ENCODE measurements at regions of chr14 and their contacts with region 1.

Region 1: DNA sequence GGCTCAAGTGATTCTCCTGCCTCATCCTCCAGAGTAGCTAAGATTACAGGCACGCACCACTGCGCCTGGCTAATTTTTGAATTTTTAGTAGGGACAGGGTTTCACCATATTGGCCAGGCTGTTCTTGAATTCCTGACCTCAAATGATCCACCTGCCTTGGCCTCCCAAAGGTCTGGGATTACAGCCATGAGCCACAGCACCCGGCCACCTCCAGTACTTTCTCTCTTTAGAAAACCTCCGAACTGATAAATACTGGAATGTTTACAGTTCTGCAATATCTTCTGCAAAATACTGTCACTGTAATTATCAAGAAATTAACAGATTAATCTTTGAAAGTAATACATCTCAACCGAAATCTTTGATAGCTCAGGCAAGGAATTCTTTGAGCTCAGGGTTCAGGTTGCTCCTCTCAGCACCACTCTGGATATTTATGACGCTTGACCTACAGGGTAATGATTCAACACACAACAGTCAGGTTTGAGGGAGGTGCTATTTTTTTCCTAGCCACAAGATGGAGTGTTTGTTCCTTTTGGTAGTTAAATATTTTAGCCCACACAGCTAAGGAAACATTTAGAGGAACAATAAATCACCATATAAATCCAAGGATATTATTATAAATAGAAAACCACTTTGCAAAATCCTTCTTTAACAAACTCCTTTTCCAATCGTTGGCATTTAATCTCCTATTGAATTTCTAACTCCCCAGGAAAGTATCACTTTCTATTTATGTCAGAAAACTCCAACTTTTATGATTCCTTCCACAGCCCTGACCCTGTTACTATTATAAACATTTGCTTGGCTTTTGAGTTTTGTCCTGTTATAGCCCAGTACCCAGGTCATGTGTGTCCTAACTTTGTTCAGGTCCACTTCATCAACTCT is 48.6 kb upstream of the GTF2A1 start:
- DNase-seq: peak; percentile 9
- H3K4me3 ChIP-seq: no peak overlapping the region
- CTCF ChIP-seq: peak; percentile 54

Region 2: GRCh38 chr14:80987235-80988032 is 281.9 kb before region 1 on chr14:
- CTCF ChIA-PET with region 1: no interaction called
- POLR2A ChIA-PET with region 1: no interaction called
- DNase-seq: no peak
- H3K4me3 ChIP-seq: no peak overlapping the region
- CTCF ChIP-seq: peak; percentile 89

Region 3: DNA sequence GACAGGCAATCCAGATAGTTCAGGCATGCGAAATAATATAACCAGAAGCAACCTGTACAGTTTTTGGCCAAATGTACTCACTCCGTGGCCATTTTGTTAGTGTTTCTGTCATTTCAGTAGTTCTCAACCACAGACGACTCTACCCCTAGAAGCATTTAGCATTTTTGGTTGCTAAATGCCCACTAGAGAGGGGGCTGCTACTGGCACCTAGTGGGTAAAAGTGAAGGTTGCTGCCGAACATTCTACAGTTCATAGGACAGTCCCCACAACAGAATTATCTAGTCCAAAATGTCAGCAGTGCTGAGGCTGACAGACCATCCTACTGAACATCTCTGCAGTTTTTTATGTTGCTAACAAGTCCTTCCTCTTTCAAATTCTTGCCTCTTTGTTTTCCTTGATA is 206.5 kb before region 1 on chr14:
- CTCF ChIA-PET with region 1: no interaction called
- POLR2A ChIA-PET with region 1: no interaction called
- DNase-seq: no peak
- H3K4me3 ChIP-seq: no peak overlapping the region
- CTCF ChIP-seq: no peak

Region 4: GRCh38 chr14:81464247-81465002 is 195.1 kb after region 1 on chr14:
- CTCF ChIA-PET with region 1: interaction called, 274 read pairs
- POLR2A ChIA-PET with region 1: no interaction called
- DNase-seq: no peak
- H3K4me3 ChIP-seq: peak overlapping the region; percentile 60
- CTCF ChIP-seq: peak; percentile 72

Measured in AG04449 (cell line).